ENCODE measurements at regions of chr12 and their contacts with region 1.

Region 1: GRCh38 chr12:114508529-114509129 is 102.7 kb upstream of the TBX5 start:
- DNase-seq: peak; percentile 48
- CTCF ChIP-seq: peak; percentile 80

Region 2: DNA sequence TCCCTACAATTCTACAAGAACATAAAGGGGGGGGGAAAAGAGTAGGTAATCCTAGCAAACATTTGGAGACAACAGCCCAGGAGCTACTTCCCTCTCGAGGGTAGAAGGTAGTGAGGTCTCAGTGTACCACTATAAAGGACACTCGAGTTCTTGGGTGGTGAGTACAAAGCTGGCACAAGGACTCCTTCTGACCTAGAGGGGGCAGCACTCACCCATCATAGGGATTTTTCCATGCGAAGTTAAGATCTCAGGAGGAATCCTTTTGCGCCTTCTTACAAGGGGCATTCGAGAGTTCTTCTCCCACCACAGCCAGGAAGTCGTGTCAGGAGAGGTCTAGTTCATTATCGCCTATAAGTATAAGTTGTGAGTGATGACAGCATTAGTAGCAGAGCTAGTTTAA is 342.3 kb before region 1 on chr12:
- CTCF ChIA-PET with region 1: interaction called, 10 read pairs
- POLR2A ChIA-PET with region 1: no interaction called
- DNase-seq: peak; percentile 12
- CTCF ChIP-seq: peak; percentile 11

Region 3: DNA sequence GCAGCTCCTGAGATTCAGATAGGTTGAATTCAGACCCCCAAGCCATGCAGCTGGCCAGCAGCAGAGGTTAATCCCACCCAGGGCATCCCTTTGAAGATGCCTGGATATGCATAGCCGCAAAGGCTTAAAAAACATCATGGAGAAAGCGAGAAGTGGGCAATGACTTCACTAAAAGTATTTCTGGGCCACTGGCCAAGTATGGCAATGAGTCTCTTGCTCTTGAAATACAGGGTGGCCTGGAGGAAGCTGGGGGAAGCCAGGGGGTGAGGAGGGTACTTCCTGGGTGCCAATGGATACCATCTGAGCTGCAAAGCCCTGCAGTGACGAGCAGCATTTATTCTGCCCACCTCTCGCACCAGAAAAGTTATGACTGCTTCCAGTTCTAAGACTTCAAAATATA is 714.7 kb after region 1 on chr12:
- CTCF ChIA-PET with region 1: no interaction called
- POLR2A ChIA-PET with region 1: no interaction called
- DNase-seq: no peak
- CTCF ChIP-seq: no peak